ENCODE measurements at regions of chr9 and their contacts with region 1.

Region 1: GRCh38 chr9:78261403-78262001 is 25.6 kb downstream of the CEP78 start:
- DNase-seq: no peak
- ATAC-seq: no peak
- H3K4me3 ChIP-seq: no peak overlapping the region
- H3K4me1 ChIP-seq: no peaks in the 10 kb centered on the region
- CTCF ChIP-seq: no peak

Region 2: GRCh38 chr9:77820293-77820954 is 441.1 kb before region 1 on chr9:
- intact Hi-C with region 1: no loop called
- DNase-seq: no peak
- ATAC-seq: peak; percentile 89
- H3K4me3 ChIP-seq: no peak overlapping the region
- H3K4me1 ChIP-seq: peaks cover 5% of the 10 kb centered on the region
- CTCF ChIP-seq: no peak

Region 3: GRCh38 chr9:78369639-78370219 is 108.2 kb after region 1 on chr9:
- intact Hi-C with region 1: loop called (anchors 5 to 10 kb)
- DNase-seq: peak; percentile 54 to 82 (median 76)
- ATAC-seq: peak; percentile 85
- H3K4me3 ChIP-seq: no peak overlapping the region
- H3K4me1 ChIP-seq: no peaks in the 10 kb centered on the region
- CTCF ChIP-seq: peak; percentile 60